A673 (cell line): ENCODE measurements at regions of chr13 and their contacts with region 1.

Region 1: DNA sequence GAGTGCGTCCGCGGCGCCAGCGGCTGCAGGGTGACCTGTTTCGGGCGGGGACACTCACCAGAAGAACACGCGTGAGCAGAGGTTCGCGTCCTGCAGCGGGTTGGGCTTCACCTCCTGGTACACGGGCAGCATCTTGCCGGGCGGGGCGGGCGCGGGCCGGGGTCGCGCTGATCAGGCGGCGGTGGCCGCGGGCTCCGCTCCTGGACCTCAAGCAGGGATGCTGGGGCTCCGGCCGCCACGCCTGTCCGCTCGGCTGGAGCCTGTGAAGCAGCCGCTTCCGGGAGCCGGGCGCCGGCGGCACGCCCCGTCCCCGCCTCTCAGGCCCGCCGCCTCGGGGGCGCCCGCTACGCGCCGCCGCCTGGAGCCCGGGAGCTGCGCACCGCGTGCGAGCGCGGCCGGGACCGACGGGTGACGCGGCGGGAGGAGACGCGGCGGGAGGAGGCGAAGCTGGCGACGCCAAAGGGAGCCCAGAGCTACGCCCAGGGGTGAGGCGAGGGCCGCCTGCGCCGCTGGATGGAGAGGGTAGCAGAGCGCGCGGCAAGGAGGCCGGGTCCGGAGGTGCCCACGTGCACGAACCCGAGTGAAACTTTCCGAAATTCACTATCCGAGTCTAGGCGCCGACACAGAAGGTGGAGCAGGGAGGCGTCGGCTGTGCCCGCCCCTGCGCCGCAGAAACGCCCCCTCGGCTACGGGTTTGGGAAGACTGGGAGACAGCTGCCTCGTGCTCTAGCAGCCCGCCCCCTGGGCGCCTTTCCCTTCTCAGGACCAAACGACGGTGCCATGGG is at the start of gene ABCC4:
- DNase-seq: peak; percentile 93
- H3K4me3 ChIP-seq: peak within 1 kb of the TSS; percentile 97
- H3K27ac ChIP-seq: peak within 1 kb of the TSS; percentile 89
- H3K4me1 ChIP-seq: peaks cover 26% of the 10 kb centered on the region
- H3K27me3 ChIP-seq: no peaks in the 10 kb centered on the region
- CTCF ChIP-seq: no peak
- total RNA-seq, gene ABCC4: 42.9 and 52.0 TPM in 2 replicates

Region 2: GRCh38 chr13:95191821-95192563 is 109.4 kb before region 1 on chr13:
- CTCF ChIA-PET with region 1: interaction called, 4 read pairs
- POLR2A ChIA-PET with region 1: no interaction called
- intact Hi-C with region 1: loop called (anchors 1 kb)
- DNase-seq: peak; percentile 91
- H3K4me3 ChIP-seq: no peak overlapping the region
- H3K27ac ChIP-seq: peak overlapping the region; percentile 60
- H3K4me1 ChIP-seq: peaks cover 29% of the 10 kb centered on the region
- H3K27me3 ChIP-seq: no peaks in the 10 kb centered on the region
- CTCF ChIP-seq: peak; percentile 96